ENCODE measurements at regions of chr4 and their contacts with region 1.

Region 1: DNA sequence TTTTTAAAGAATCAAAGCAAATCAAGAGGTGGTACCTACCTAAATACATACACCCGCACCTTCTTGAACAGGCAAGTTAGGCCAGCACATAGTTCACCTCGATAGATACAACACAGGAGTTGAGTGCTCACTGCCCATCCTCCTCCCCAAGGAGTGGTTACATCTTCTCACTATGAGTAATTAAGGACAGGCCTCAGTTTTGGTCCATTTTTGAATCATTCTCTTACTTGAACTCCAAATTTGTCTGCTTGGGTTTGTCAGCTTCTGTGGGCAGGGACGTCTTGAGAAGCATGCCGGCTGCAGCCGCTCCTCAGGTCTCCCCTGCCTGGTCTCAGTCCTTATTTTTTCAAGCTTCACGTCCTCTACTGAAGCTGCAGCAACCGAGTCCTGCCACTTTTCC is 190.6 kb upstream of the RBPJ start:
- DNase-seq: peak; percentile 58
- ATAC-seq: peak; percentile 51
- H3K4me3 Mint-ChIP-seq: no peak overlapping the region
- H3K27ac Mint-ChIP-seq: peak overlapping the region; percentile 54
- H3K4me1 Mint-ChIP-seq: peaks cover 52% of the 10 kb centered on the region
- H3K27me3 Mint-ChIP-seq: peaks cover 8% of the 10 kb centered on the region
- CTCF ChIP-seq: no peak

Region 2: GRCh38 chr4:26081795-26082498 is 48.2 kb before region 1 on chr4:
- CTCF ChIA-PET with region 1: interaction called, 3 read pairs
- POLR2A ChIA-PET with region 1: interaction called, 3 read pairs
- intact Hi-C with region 1: loop called (anchors 5 kb)
- DNase-seq: no peak
- ATAC-seq: peak; percentile 44
- H3K4me3 Mint-ChIP-seq: no peak overlapping the region
- H3K27ac Mint-ChIP-seq: peak overlapping the region; percentile 78
- H3K4me1 Mint-ChIP-seq: peaks cover 66% of the 10 kb centered on the region
- H3K27me3 Mint-ChIP-seq: peaks cover 28% of the 10 kb centered on the region
- CTCF ChIP-seq: peak; percentile 64

Region 3: GRCh38 chr4:26150948-26151347 is 20.8 kb after region 1 on chr4:
- CTCF ChIA-PET with region 1: no interaction called
- POLR2A ChIA-PET with region 1: no interaction called
- intact Hi-C with region 1: no loop called
- DNase-seq: peak; percentile 35
- ATAC-seq: peak; percentile 70
- H3K4me3 Mint-ChIP-seq: no peak overlapping the region
- H3K27ac Mint-ChIP-seq: peak overlapping the region; percentile 42
- H3K4me1 Mint-ChIP-seq: peaks cover 27% of the 10 kb centered on the region
- H3K27me3 Mint-ChIP-seq: peaks cover 9% of the 10 kb centered on the region
- CTCF ChIP-seq: no peak

Region 4: DNA sequence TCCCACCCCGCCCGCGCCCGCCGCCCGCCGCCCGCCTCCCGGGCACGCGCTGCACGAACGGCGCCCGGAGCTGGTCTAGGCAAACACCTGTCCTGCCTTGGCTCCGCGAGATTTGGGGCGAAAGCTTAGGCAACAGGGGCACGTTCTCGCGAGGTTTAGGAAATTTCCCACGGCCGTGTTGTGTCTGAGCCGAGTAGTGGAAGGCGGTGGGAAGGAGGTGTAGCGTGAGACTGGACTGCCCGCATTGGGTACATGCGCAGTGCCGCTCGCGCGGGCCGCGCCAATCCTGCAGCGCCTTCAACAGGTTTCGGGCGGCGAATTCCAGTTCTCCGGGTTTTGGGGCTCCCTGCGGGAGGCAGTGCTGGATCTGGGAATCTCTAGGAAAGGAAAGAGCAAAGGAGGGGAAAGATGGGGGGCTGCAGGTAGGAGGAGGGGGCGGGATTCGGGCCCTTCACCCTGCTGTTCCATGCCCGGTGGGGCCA is 189.3 kb after region 1 on chr4:
- CTCF ChIA-PET with region 1: interaction called, 3 read pairs
- POLR2A ChIA-PET with region 1: interaction called, 4 read pairs
- intact Hi-C with region 1: loop called (anchors 5 kb)
- DNase-seq: peak; percentile 99
- ATAC-seq: peak; percentile 67
- H3K4me3 Mint-ChIP-seq: peak overlapping the region; percentile 92
- H3K27ac Mint-ChIP-seq: peak overlapping the region; percentile 100
- H3K4me1 Mint-ChIP-seq: peaks cover 34% of the 10 kb centered on the region
- H3K27me3 Mint-ChIP-seq: no peaks in the 10 kb centered on the region
- CTCF ChIP-seq: no peak